ENCODE measurements at regions of chr7 and their contacts with region 1.

Region 1: DNA sequence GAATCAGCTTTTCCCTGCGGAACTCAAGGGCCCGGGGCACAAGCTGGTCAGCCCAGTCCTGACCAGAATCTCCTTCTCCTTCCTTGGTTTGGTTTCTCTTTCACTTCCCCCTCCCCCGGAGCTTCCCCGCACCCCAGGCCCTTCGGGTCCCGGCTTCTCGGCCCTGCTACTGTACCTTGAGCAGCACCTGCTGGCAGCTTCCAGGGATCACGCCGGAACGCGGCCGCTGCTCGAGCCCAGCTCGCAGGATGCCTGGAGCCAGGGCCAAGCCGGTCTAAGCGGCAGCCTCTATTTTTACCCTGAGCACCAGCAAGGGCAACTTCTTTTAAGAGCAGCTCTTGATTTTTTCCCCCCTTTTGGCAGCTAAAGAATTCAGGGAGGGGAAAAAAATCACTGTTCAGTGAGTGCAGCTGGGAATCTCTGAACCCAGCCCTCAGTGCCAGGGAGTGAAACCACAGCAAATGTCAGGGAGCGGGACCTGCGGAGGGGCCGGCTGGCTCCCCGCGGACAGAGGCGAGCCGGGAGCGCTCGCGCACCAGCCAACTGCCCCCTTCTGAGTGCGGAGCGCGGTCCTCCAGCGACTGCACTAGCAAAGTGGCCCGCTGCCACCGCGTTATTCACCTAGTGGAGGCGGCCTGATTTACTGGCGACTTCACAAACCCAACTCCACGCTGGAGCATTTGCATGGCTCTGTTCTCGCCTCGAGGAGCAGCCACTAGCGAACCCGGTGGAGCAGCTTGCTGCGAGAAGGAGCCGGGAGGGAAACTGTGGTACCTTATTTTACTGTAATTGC is 2.4 kb upstream of the INHBA start:
- DNase-seq: peak; percentile 84
- H3K4me3 Mint-ChIP-seq: peak overlapping the region; percentile 80
- H3K27ac Mint-ChIP-seq: peak overlapping the region; percentile 71
- H3K4me1 Mint-ChIP-seq: peaks cover 34% of the 10 kb centered on the region
- H3K27me3 Mint-ChIP-seq: no peaks in the 10 kb centered on the region
- CTCF ChIP-seq: peak; percentile 92

Region 2: DNA sequence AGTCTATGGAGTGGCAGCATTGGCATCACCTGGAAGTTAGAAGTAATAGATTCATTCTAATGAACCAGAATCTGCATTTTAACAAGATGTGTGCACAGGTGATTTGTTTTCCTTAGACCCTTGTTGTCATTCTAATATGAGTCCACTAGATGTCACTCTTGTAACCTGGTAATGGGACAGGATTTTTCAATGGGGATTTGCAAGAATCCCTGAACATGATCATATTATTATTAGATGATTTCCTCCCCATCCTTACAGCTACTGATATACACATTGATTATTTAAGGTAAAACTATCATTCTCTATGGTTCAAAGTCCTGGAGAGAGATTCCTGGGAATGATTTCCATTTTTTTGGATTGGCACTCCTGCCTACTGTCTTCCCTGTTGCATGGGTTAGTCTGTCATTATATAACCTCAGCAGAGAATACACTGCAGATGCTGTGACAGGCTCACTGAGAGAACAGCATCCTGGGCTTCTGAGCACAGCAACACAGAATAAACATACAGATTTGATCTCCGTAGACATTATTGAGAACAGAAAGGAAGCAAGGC is 1375.6 kb before region 1 on chr7:
- CTCF ChIA-PET with region 1: interaction called, 74 read pairs
- POLR2A ChIA-PET with region 1: interaction called, 4 read pairs
- intact Hi-C with region 1: loop called (anchors 1 kb)
- DNase-seq: peak; percentile 68
- H3K4me3 Mint-ChIP-seq: no peak overlapping the region
- H3K27ac Mint-ChIP-seq: no peak overlapping the region
- H3K4me1 Mint-ChIP-seq: no peaks in the 10 kb centered on the region
- H3K27me3 Mint-ChIP-seq: no peaks in the 10 kb centered on the region
- CTCF ChIP-seq: peak; percentile 78

Region 3: DNA sequence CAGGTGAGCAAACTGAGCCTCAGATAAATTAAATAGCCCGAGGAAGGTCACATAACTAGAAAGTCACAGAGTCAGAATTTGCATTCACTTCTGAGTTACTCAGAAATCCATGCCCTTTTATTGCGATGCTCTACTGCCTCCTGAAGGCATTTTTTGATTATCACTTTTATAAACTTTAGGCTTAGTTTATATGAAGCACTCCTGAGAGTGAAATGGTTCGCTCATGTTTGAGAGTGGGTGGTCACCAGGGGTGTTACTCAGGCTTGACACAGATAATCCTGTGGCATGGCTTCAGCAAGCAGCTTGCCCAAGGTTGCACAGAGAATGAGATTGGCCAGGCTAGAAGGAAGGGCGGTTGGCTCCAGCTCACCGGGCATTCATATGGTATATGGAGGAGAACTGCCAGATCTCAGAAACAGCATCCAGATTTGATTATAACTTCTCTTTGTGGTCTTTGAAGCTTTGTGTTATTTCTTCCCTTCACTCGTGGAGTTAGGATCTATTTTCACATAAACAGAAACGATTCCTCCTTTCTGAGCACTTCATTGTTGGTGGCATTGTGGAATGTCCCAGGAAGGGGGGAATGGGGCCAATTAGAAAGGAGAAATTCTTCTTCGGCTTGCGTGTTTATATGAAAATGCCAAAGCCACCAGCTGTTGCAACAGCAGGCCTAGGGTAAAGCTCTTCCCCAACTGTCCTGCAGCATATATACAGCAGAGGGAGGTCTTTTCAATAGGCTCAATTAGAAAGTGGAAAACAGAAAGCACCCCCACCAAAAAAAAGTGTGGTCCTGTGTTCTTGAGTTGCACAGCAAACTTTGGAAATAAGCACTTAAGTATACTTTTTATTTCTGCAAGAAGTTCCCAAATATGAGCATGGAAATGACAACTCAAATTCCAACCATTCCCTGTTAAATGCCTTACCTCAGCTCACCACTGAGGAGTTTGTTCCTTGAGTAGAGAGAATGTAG is 941.7 kb before region 1 on chr7:
- CTCF ChIA-PET with region 1: interaction called, 9 read pairs
- POLR2A ChIA-PET with region 1: interaction called, 5 read pairs
- intact Hi-C with region 1: loop called (anchors 2 kb)
- DNase-seq: peak; percentile 8
- H3K4me3 Mint-ChIP-seq: no peak overlapping the region
- H3K27ac Mint-ChIP-seq: no peak overlapping the region
- H3K4me1 Mint-ChIP-seq: no peaks in the 10 kb centered on the region
- H3K27me3 Mint-ChIP-seq: no peaks in the 10 kb centered on the region
- CTCF ChIP-seq: peak; percentile 9

Region 4: DNA sequence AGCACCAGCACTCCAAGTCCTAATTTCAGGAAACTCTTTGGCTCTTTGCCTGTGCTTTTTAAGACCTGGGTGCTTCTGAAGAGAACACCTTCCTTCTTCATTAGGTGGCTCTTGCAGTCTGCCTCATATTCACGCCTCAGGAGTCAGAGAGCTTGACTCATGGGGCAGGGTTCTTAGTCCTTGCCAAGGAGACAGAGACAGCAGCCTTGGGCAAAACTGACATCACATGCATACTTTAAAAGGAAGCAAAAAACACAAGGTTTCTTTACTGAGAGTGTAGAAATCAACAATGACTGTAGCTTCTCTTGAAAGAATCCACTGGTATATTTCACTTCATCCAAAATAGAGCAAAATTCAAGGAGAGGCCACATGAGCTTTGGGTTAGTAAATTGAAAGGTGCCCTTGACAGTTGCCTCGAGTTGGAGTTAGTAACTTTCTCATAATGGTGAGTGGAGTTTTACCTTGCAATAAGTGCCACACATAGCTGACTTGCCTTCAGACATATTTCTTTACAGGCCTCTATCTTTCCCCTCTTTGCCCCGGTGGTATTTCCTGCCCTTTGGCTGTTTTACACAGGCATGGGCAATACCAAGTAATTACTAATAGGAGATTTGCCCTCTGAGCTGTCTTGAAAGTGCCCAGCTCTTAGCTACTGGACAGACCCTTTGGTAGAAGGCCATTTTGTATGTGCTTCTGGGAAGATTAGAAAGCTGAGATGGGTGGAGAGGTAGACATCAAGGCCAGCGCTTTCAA is 782.8 kb before region 1 on chr7:
- CTCF ChIA-PET with region 1: interaction called, 5 read pairs
- POLR2A ChIA-PET with region 1: no interaction called
- intact Hi-C with region 1: loop called (anchors 2 kb)
- DNase-seq: peak; percentile 95
- H3K4me3 Mint-ChIP-seq: no peak overlapping the region
- H3K27ac Mint-ChIP-seq: peak overlapping the region; percentile 92
- H3K4me1 Mint-ChIP-seq: peaks cover 51% of the 10 kb centered on the region
- H3K27me3 Mint-ChIP-seq: no peaks in the 10 kb centered on the region
- CTCF ChIP-seq: no peak

Region 5: DNA sequence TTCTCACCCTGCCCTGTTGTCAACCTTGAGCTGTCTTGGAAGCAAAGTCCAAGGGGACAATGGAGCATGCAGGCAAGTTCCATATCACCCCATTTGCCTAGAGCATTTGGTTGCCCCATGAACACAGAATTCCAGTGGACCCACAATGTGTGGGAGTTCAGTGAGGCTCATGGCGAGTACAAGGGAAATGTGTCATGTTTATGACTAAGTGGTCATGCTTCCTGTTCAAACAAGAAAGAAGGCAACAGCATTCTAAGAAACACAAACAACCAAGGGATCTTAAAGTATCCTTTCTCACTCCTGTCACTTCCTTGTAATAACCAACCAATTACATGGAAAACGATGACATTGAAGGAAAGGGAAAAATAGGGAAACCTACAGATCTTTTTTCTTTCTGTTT is 515.4 kb before region 1 on chr7:
- CTCF ChIA-PET with region 1: no interaction called
- POLR2A ChIA-PET with region 1: interaction called, 3 read pairs
- intact Hi-C with region 1: loop called (anchors 5 kb)
- DNase-seq: peak; percentile 96
- H3K4me3 Mint-ChIP-seq: no peak overlapping the region
- H3K27ac Mint-ChIP-seq: peak overlapping the region; percentile 37
- H3K4me1 Mint-ChIP-seq: peaks cover 32% of the 10 kb centered on the region
- H3K27me3 Mint-ChIP-seq: no peaks in the 10 kb centered on the region
- CTCF ChIP-seq: no peak

Measured in MCF 10A (cell line).